Thyroid gland (tissue), 4 donors: ENCODE measurements at regions of chr10 and their contacts with region 1.

Region 1: GRCh38 chr10:102225646-102226541 is at the start of gene ELOVL3:
- DNase-seq: peak; percentile 91 to 92
- H3K4me3 ChIP-seq: peak within 1 kb of the TSS in 1 of 3 donors; percentile 8
- H3K27ac ChIP-seq: peak within 1 kb of the TSS; percentile 30 to 63 (median 41)
- H3K4me1 ChIP-seq: peaks cover 14 to 19% of the 10 kb centered on the region in 2 donors
- H3K27me3 ChIP-seq: peaks cover 2% of the 10 kb centered on the region
- CTCF ChIP-seq: peak in 3 of 6 experiments; percentile 2 to 13 (median 2)
- POLR2A ChIP-seq: no peak
- total RNA-seq, gene ELOVL3: not detected

Region 2: GRCh38 chr10:102009801-102010425 is 216.0 kb before region 1 on chr10:
- intact Hi-C with region 1: no loop called
- DNase-seq: peak; percentile 53 to 55
- H3K4me3 ChIP-seq: no peak overlapping the region
- H3K27ac ChIP-seq: no peak overlapping the region
- H3K4me1 ChIP-seq: peaks cover 0 to 3% of the 10 kb centered on the region in 2 donors
- H3K27me3 ChIP-seq: no peaks in the 10 kb centered on the region
- CTCF ChIP-seq: peak; percentile 69 to 98 (median 90)
- POLR2A ChIP-seq: no peak

Region 3: DNA sequence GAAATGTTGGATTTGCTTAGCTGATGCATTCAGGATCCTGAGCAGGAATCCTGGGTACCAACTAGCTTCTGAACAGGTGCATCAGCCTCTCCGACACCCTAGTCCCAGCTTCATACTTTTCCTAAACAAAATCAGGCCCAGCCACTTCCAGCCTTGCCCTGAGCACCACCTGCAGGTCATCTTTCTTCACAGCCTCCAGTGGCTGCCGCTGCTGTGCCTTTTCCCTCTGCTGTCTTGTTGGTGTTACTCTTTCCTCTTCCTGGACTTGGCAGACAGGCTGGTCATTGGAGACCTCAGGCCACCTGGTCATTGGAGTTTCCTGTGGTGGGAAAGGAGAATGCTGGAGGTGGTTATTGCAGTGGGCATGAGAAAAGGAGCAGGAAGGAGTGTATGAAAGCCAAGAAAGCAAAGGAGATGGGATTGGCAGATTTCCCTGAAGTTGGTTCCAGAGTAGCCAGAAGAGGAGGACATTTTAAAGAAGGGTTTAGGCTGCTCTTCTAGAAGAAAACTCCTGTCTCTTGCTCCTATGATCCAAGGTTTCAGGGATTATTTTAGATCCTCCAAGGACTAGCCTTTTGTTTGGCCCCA is 121.4 kb after region 1 on chr10:
- intact Hi-C with region 1: loop called (anchors 2 kb)
- DNase-seq: peak; percentile 55 to 65
- H3K4me3 ChIP-seq: no peak overlapping the region
- H3K27ac ChIP-seq: peak overlapping the region in 1 of 3 donors; percentile 13
- H3K4me1 ChIP-seq: no peaks in the 10 kb centered on the region
- H3K27me3 ChIP-seq: no peaks in the 10 kb centered on the region
- CTCF ChIP-seq: peak; percentile 36 to 80 (median 55)
- POLR2A ChIP-seq: no peak

Region 4: GRCh38 chr10:102399217-102400089 is 173.6 kb after region 1 on chr10:
- intact Hi-C with region 1: loop called (anchors 5 kb)
- DNase-seq: peak; percentile 89 to 91
- H3K4me3 ChIP-seq: peak overlapping the region in 2 of 3 donors; percentile 52 to 65
- H3K27ac ChIP-seq: peak overlapping the region; percentile 67 to 90 (median 84)
- H3K4me1 ChIP-seq: peaks cover 7 to 22% of the 10 kb centered on the region in 2 donors
- H3K27me3 ChIP-seq: no peaks in the 10 kb centered on the region
- CTCF ChIP-seq: peak; percentile 74 to 98 (median 96)
- POLR2A ChIP-seq: peak in 1 of 2 donors; percentile 62

Region 5: GRCh38 chr10:102420810-102421644 is 195.1 kb after region 1 on chr10 and contains the start of gene FBXL15:
- intact Hi-C with region 1: no loop called
- DNase-seq: peak; percentile 98
- H3K4me3 ChIP-seq: peak within 1 kb of the TSS; percentile 3 to 91 (median 88)
- H3K27ac ChIP-seq: peak within 1 kb of the TSS; percentile 32 to 92 (median 87)
- H3K4me1 ChIP-seq: peaks cover 29 to 36% of the 10 kb centered on the region in 2 donors
- H3K27me3 ChIP-seq: no peaks in the 10 kb centered on the region
- CTCF ChIP-seq: peak in 1 of 6 experiments; percentile 35
- POLR2A ChIP-seq: peak in 1 of 2 donors; percentile 65
- total RNA-seq, gene FBXL15: 13.4 to 34.0 (median 27.2) TPM

Region 6: DNA sequence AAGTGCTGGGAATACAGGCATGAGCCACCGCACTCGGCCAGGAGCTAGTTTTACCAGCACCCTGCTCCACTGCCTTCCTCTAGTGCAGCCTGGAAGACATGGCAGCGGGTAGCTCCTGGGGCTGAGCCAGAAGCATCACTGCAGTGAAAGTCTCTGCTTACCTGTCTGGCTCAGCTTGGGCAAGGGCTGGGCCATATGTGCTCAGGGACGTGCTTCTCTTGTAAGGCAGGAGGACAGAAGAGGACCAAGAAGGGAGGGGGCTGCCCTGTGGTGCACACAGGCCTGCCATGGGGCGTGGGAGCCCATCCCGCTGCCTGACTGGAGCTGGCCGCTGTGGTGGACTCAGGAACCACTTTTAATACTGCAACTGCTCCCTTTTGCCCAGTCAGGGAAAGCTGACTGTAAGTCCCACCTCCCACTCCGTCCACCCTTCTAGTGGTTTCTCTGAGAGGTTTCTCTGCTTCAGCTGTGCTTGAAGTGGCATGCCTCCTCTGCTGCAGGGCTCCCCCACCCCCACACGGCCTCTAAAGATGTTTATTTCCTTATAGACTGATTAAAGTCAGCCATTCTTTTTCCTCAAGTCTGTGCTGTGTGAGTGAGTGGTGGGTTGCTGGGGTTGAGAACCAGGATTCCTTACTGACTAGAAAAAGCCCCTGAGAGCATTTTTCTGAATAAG is 250.7 kb after region 1 on chr10:
- intact Hi-C with region 1: loop called (anchors 10 kb)
- DNase-seq: peak; percentile 90 to 94
- H3K4me3 ChIP-seq: no peak overlapping the region
- H3K27ac ChIP-seq: peak overlapping the region; percentile 24 to 75 (median 48)
- H3K4me1 ChIP-seq: peaks cover 5 to 11% of the 10 kb centered on the region in 2 donors
- H3K27me3 ChIP-seq: no peaks in the 10 kb centered on the region
- CTCF ChIP-seq: peak in 1 of 6 experiments; percentile 11
- POLR2A ChIP-seq: peak in 1 of 2 donors; percentile 46

Region 7: DNA sequence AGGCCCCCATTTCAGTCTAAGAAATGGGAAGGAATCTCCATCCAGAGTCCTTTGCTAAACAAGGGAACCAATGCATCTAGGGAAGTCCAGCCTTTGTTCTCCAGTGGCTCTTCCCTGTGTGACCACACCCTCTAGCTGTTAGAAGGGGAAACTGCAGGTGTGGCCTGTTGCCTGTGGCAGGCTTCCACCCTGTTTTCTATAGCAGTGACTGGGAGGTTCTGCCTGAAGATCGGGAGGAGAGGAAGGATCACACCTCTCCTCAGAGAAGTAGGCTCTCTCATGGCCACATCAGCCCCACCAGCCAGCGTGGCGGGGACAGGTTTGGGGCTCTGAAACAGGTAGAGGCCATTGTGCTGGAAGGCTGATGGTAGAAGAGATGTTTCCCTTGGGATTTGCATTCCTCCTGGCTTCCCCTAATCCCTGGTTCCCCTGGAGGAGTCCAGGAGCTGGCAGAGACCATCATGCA is 370.6 kb after region 1 on chr10:
- intact Hi-C with region 1: loop called (anchors 10 kb)
- DNase-seq: peak; percentile 56 to 60
- H3K4me3 ChIP-seq: no peak overlapping the region
- H3K27ac ChIP-seq: peak overlapping the region in 2 of 3 donors; percentile 22 to 40
- H3K4me1 ChIP-seq: peaks cover 8 to 51% of the 10 kb centered on the region in 2 donors
- H3K27me3 ChIP-seq: no peaks in the 10 kb centered on the region
- CTCF ChIP-seq: peak; percentile 39 to 86 (median 66)
- POLR2A ChIP-seq: no peak